ENCODE measurements at regions of chr12 and their contacts with region 1.

Region 1: DNA sequence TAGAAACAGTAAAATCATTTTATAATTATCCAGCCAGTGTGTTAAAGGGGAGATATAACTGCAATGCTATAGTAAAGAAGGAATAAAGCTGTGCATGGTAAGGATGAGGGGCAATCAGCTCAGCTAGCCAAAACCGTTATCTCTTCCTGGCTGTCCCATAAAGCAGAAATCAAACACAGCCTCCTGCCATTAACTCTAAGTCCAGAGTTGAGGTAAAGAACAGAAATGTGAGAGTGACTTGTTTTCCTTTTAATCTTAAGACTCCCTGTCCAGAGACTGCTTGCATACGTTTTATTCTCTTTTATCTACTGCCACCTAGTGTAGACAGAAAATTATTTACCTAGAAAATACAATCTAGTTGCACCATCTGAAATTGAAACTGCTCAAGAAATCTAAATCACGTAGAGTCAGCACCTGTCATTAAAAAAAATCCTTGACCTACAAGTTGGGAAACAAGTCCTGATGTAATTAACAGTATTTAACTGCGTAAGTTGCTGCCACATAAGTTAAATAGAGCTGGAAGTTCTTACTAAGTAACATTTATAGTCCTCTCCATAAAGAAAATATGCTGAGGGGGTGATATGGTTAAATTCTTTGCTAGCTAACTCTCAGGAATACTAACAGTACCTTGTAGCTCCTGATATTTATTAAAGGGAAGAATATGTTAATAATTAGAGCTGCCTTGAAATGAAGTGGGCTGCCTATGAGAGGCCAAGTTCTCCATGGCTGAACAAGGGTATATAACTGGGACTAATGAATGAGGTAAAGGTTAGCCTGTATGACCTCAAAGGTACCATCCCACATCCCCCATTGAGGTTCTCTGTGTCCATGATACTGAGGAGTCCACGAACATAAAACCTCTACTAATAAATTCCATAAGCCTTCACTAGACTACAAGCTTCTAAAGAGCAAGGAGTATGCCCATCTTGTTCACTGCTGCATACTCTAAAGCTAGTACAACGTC is 62.7 kb downstream of the GALNT4 start:
- DNase-seq: peak in 1 of 2 donors; percentile 71
- ATAC-seq: peak; percentile 93 to 95 (median 94)
- H3K4me3 ChIP-seq: no peak overlapping the region
- H3K4me3 Mint-ChIP-seq: peak overlapping the region; percentile 57
- H3K27ac ChIP-seq: no peak overlapping the region
- H3K27ac Mint-ChIP-seq: peak overlapping the region; percentile 14 to 47
- H3K4me1 ChIP-seq: peaks cover 2% of the 10 kb centered on the region
- H3K4me1 Mint-ChIP-seq: peaks cover 37 to 40% of the 10 kb centered on the region in 2 donors
- H3K27me3 ChIP-seq: no peaks in the 10 kb centered on the region
- H3K27me3 Mint-ChIP-seq: no peaks in the 10 kb centered on the region
- CTCF ChIP-seq: peak; percentile 80

Region 2: DNA sequence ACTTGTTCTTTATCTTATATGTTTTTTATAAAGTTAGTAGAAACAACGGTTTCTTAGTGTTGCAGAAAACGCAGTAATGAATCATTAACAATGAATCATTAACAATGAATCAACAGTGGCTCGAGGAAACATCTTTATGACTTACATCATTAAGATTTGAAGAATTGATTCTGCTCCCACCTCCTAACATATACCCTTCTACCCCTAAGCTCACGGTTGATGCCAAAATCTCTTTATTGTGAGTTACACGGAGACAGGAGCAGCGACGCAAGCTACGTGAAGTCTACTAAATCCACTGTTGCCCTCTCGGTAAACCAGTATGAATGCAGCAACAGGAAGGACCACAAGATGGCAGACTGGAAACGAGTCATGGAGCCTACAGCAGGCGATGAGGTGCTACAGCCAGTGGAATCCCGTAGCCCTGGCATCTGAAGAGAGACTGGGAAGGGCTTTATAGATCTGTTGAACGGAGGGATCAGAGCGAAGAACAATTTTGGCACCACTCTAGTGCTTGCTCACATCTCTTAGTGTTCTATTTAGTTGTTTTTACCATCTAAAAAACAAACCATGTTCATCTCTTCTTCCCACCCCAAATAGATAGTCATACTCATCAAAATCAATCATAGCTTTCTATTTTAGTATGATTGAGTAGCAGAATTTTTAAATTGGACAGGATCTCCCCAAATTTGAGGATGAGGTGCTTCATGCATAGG is 442.4 kb before region 1 on chr12:
- intact Hi-C with region 1: loop called (anchors 1 kb)
- DNase-seq: peak; percentile 55 to 86
- ATAC-seq: peak; percentile 91 to 99 (median 97)
- H3K4me3 ChIP-seq: no peak overlapping the region
- H3K4me3 Mint-ChIP-seq: no peak overlapping the region
- H3K27ac ChIP-seq: no peak overlapping the region
- H3K27ac Mint-ChIP-seq: no peak overlapping the region
- H3K4me1 ChIP-seq: peaks cover 4% of the 10 kb centered on the region
- H3K4me1 Mint-ChIP-seq: peaks cover 5 to 7% of the 10 kb centered on the region in 2 donors
- H3K27me3 ChIP-seq: no peaks in the 10 kb centered on the region
- H3K27me3 Mint-ChIP-seq: peaks cover 0 to 6% of the 10 kb centered on the region in 2 donors
- CTCF ChIP-seq: peak; percentile 72

Region 3: GRCh38 chr12:89051065-89051677 is 410.8 kb before region 1 on chr12:
- intact Hi-C with region 1: loop called (anchors 1 kb)
- DNase-seq: peak in 1 of 2 donors; percentile 76
- ATAC-seq: peak; percentile 61 to 78 (median 76)
- H3K4me3 ChIP-seq: no peak overlapping the region
- H3K4me3 Mint-ChIP-seq: no peak overlapping the region
- H3K27ac ChIP-seq: no peak overlapping the region
- H3K27ac Mint-ChIP-seq: no peak overlapping the region
- H3K4me1 ChIP-seq: no peaks in the 10 kb centered on the region
- H3K4me1 Mint-ChIP-seq: no peaks in the 10 kb centered on the region
- H3K27me3 ChIP-seq: no peaks in the 10 kb centered on the region
- H3K27me3 Mint-ChIP-seq: no peaks in the 10 kb centered on the region
- CTCF ChIP-seq: peak; percentile 97

Region 4: GRCh38 chr12:89345830-89346740 is 115.8 kb before region 1 on chr12:
- intact Hi-C with region 1: loop called (anchors 2 kb)
- DNase-seq: peak; percentile 48 to 74
- ATAC-seq: peak; percentile 77 to 92 (median 90)
- H3K4me3 ChIP-seq: peak overlapping the region; percentile 15
- H3K4me3 Mint-ChIP-seq: peak overlapping the region; percentile 98
- H3K27ac ChIP-seq: peak overlapping the region; percentile 23
- H3K27ac Mint-ChIP-seq: peak overlapping the region; percentile 85
- H3K4me1 ChIP-seq: peaks cover 42% of the 10 kb centered on the region
- H3K4me1 Mint-ChIP-seq: peaks cover 82 to 91% of the 10 kb centered on the region in 2 donors
- H3K27me3 ChIP-seq: no peaks in the 10 kb centered on the region
- H3K27me3 Mint-ChIP-seq: no peaks in the 10 kb centered on the region
- CTCF ChIP-seq: no peak

Region 5: GRCh38 chr12:89529738-89530137 is 67.8 kb after region 1 on chr12:
- intact Hi-C with region 1: loop called (anchors 2 kb)
- DNase-seq: peak in 1 of 2 donors; percentile 73
- ATAC-seq: peak; percentile 39 to 53 (median 45)
- H3K4me3 ChIP-seq: no peak overlapping the region
- H3K4me3 Mint-ChIP-seq: peak overlapping the region; percentile 35
- H3K27ac ChIP-seq: no peak overlapping the region
- H3K27ac Mint-ChIP-seq: peak overlapping the region in 1 of 2 donors; percentile 79
- H3K4me1 ChIP-seq: no peaks in the 10 kb centered on the region
- H3K4me1 Mint-ChIP-seq: peaks cover 12 to 14% of the 10 kb centered on the region in 2 donors
- H3K27me3 ChIP-seq: no peaks in the 10 kb centered on the region
- H3K27me3 Mint-ChIP-seq: no peaks in the 10 kb centered on the region
- CTCF ChIP-seq: peak; percentile 84